AG04450 (cell line): ENCODE measurements at regions of chr11 and their contacts with region 1.

Region 1: GRCh38 chr11:70397983-70398833 is at the start of gene CTTN:
- DNase-seq: peak; percentile 59
- H3K4me3 ChIP-seq: peak within 1 kb of the TSS; percentile 87
- H3K27ac ChIP-seq: peak within 1 kb of the TSS; percentile 84
- H3K27me3 ChIP-seq: no peaks in the 10 kb centered on the region
- CTCF ChIP-seq: no peak
- polyA plus RNA-seq, gene CTTN: 180 and 192 TPM in 2 replicates

Region 2: DNA sequence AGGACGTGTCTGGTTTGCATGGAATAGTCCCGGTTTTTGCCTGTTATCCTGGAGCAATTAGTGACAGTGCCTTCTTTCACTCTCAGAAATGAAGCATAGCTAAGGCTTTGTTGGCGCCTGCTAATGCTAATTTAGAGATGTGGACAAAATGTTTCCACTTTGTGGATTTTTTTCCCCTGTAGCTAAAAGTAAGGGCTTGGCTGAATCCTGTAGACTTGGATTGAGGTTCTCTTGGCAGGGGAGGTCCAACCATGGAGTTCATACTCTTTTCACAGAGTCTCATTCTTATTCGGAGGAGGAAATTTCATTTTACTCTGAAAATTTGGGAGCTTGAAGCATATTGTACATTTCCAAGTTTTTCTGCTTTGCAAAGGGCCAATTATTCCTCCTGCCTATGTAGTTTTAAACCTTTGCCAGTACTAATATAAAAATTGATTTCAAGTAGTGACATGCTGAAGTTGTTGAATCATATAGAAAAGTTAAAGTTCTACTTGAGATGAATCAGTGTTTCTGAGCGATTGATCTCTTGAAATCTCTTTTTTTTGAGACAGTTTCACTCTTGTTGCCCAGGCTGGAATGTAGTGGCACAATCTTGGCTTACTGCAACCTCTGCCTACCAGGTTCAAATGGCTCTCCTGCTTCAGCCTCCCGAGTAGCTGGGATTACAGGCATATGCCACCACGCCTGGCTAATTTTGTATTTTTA is 107.7 kb before region 1 on chr11:
- CTCF ChIA-PET with region 1: no interaction called
- POLR2A ChIA-PET with region 1: no interaction called
- DNase-seq: no peak
- H3K4me3 ChIP-seq: no peak overlapping the region
- H3K27ac ChIP-seq: no peak overlapping the region
- H3K27me3 ChIP-seq: no peaks in the 10 kb centered on the region
- CTCF ChIP-seq: no peak

Region 3: GRCh38 chr11:70343636-70344035 is 54.6 kb before region 1 on chr11:
- CTCF ChIA-PET with region 1: no interaction called
- POLR2A ChIA-PET with region 1: no interaction called
- DNase-seq: no peak
- H3K4me3 ChIP-seq: no peak overlapping the region
- H3K27ac ChIP-seq: no peak overlapping the region
- H3K27me3 ChIP-seq: no peaks in the 10 kb centered on the region
- CTCF ChIP-seq: no peak

Region 4: GRCh38 chr11:70381872-70382861 is 16.0 kb before region 1 on chr11:
- CTCF ChIA-PET with region 1: no interaction called
- POLR2A ChIA-PET with region 1: interaction called, 17 read pairs
- DNase-seq: peak; percentile 64
- H3K4me3 ChIP-seq: peak overlapping the region; percentile 29; the same call in 1 of the 2 replicates
- H3K27ac ChIP-seq: peak overlapping the region; percentile 84
- H3K27me3 ChIP-seq: no peaks in the 10 kb centered on the region
- CTCF ChIP-seq: peak; percentile 33